ENCODE measurements at regions of chr15 and their contacts with region 1.

Region 1: GRCh38 chr15:44066316-44066740 is 128.7 kb downstream of the FRMD5 start:
- DNase-seq: peak in 1 of 2 donors; percentile 22
- H3K4me3 ChIP-seq: no peak overlapping the region
- CTCF ChIP-seq: peak in 1 of 3 donors; percentile 13
- POLR2A ChIP-seq: no peak

Region 2: GRCh38 chr15:43920815-43921214 is 145.5 kb before region 1 on chr15:
- intact Hi-C with region 1: loop called (anchors 10 kb)
- DNase-seq: no peak
- H3K4me3 ChIP-seq: no peak overlapping the region
- CTCF ChIP-seq: no peak
- POLR2A ChIP-seq: no peak

Measured in lower leg skin (tissue), 4 donors.